CD4-positive, alpha-beta memory T cell (primary cell): ENCODE measurements at regions of chr4 and their contacts with region 1.

Region 1: DNA sequence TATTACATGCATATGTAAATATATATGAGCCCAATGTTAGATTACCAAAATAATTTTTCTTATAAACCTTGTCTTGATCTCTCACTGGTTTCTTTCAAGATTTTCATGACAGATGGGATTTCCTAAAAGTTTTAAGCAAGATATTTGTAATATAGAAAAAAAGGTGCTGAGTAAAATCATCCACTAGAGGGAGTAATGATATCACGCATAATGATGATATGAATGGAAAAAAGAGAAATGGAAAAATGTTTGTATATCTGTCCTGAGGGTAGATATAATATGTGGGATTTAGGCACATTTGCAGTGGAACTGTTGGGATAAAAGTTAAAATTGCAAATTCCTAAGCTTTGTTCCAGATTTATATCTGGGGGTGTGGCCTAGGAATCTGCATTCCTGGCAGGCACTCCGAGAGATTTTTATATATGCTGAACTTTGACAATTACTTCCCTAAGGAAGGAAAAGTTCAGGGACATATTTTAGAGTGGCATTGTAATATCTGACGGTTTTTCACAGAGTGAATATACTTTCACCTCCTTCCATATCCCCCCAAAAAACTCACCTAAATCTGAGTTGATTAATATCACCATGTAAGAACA is 60.5 kb downstream of the TMA16 start:
- DNase-seq: peak in 4 of 5 donors; percentile 34 to 43 (median 38)
- H3K4me3 ChIP-seq: no peak overlapping the region
- H3K4me3 Mint-ChIP-seq: no peak overlapping the region
- H3K27ac ChIP-seq: no peak overlapping the region
- H3K27ac Mint-ChIP-seq: peak overlapping the region in 2 of 7 donors; percentile 2 to 10
- H3K4me1 ChIP-seq: peaks cover 38% of the 10 kb centered on the region
- H3K4me1 Mint-ChIP-seq: peaks cover 29 to 43% (median 31%) of the 10 kb centered on the region in 4 donors
- H3K27me3 ChIP-seq: no peaks in the 10 kb centered on the region
- H3K27me3 Mint-ChIP-seq: no peaks in the 10 kb centered on the region

Region 2: GRCh38 chr4:163528653-163529052 is 26.3 kb before region 1 on chr4:
- CTCF ChIA-PET with region 1: interaction called, 6 read pairs
- POLR2A ChIA-PET with region 1: no interaction called
- intact Hi-C with region 1: loop called (anchors 1 kb)
- DNase-seq: no peak
- H3K4me3 ChIP-seq: no peak overlapping the region
- H3K4me3 Mint-ChIP-seq: no peak overlapping the region
- H3K27ac ChIP-seq: no peak overlapping the region
- H3K27ac Mint-ChIP-seq: no peak overlapping the region
- H3K4me1 ChIP-seq: no peaks in the 10 kb centered on the region
- H3K4me1 Mint-ChIP-seq: no peaks in the 10 kb centered on the region
- H3K27me3 ChIP-seq: no peaks in the 10 kb centered on the region
- H3K27me3 Mint-ChIP-seq: no peaks in the 10 kb centered on the region

Region 3: DNA sequence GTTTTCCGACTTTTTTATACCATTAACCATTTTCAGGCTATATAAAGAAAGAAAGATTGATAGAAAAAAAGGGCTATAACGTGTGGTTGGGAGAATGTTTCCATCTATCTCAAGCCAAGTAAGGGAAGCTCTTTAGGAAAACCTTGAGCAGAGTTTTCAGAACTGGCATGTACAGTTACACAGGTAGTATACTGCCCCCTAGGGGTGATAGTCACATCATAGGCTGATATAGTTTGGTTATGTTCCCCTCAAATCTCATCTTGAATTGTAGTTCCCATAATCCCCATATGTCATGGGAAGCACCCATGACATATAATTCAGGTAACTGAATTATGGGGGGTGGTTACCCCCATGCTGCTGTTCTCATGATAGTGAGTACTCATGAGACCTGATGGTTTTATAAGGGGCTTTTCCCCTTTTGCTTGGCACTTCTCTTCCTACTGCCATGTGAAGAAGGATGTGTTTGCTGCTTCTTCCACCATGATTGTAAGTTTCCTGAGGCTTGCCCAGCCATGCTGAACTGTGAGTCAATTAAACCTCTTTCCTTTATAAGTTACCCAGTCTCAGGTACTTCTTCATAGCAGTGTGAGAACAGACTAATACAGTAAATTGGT is 126.3 kb after region 1 on chr4:
- CTCF ChIA-PET with region 1: interaction called, 633 read pairs
- POLR2A ChIA-PET with region 1: interaction called, 7 read pairs
- intact Hi-C with region 1: loop called (anchors 1 kb)
- DNase-seq: peak; percentile 28 to 66 (median 65)
- H3K4me3 ChIP-seq: no peak overlapping the region
- H3K4me3 Mint-ChIP-seq: no peak overlapping the region
- H3K27ac ChIP-seq: no peak overlapping the region
- H3K27ac Mint-ChIP-seq: no peak overlapping the region
- H3K4me1 ChIP-seq: no peaks in the 10 kb centered on the region
- H3K4me1 Mint-ChIP-seq: peaks cover 1 to 9% (median 4%) of the 10 kb centered on the region in 4 donors
- H3K27me3 ChIP-seq: no peaks in the 10 kb centered on the region
- H3K27me3 Mint-ChIP-seq: peaks cover 2 to 7% of the 10 kb centered on the region in 2 donors

Region 4: GRCh38 chr4:163895378-163896005 is 340.5 kb after region 1 on chr4:
- CTCF ChIA-PET with region 1: interaction called, 3 read pairs
- POLR2A ChIA-PET with region 1: no interaction called
- intact Hi-C with region 1: loop called (anchors 5 kb)
- DNase-seq: peak; percentile 48 to 75 (median 60)
- H3K4me3 ChIP-seq: no peak overlapping the region
- H3K4me3 Mint-ChIP-seq: peak overlapping the region in 5 of 8 donors; percentile 0 to 74 (median 61)
- H3K27ac ChIP-seq: no peak overlapping the region
- H3K27ac Mint-ChIP-seq: peak overlapping the region in 6 of 7 donors; percentile 26 to 65 (median 48)
- H3K4me1 ChIP-seq: peaks cover 23% of the 10 kb centered on the region
- H3K4me1 Mint-ChIP-seq: peaks cover 10 to 29% (median 24%) of the 10 kb centered on the region in 4 donors
- H3K27me3 ChIP-seq: no peaks in the 10 kb centered on the region
- H3K27me3 Mint-ChIP-seq: peaks cover 0 to 1% of the 10 kb centered on the region in 2 donors

Region 5: GRCh38 chr4:164748375-164748774 is 1193.4 kb after region 1 on chr4:
- CTCF ChIA-PET with region 1: interaction called, 3 read pairs
- POLR2A ChIA-PET with region 1: no interaction called
- intact Hi-C with region 1: loop called (anchors 1 kb)
- DNase-seq: peak in 2 of 5 donors; percentile 10
- H3K4me3 ChIP-seq: no peak overlapping the region
- H3K4me3 Mint-ChIP-seq: no peak overlapping the region
- H3K27ac ChIP-seq: no peak overlapping the region
- H3K27ac Mint-ChIP-seq: no peak overlapping the region
- H3K4me1 ChIP-seq: no peaks in the 10 kb centered on the region
- H3K4me1 Mint-ChIP-seq: no peaks in the 10 kb centered on the region
- H3K27me3 ChIP-seq: no peaks in the 10 kb centered on the region
- H3K27me3 Mint-ChIP-seq: peaks cover 3% of the 10 kb centered on the region in 2 donors